Mammary epithelial cell (primary cell): ENCODE measurements at regions of chr17 and their contacts with region 1.

Region 1: GRCh38 chr17:81576621-81577277 is 24.6 kb upstream of the FAAP100 start:
- DNase-seq: peak; percentile 70
- H3K4me3 ChIP-seq: no peak overlapping the region
- H3K27ac ChIP-seq: peak overlapping the region; percentile 8
- H3K4me1 ChIP-seq: peaks cover 33% of the 10 kb centered on the region
- H3K27me3 ChIP-seq: no peaks in the 10 kb centered on the region
- CTCF ChIP-seq: no peak

Region 2: DNA sequence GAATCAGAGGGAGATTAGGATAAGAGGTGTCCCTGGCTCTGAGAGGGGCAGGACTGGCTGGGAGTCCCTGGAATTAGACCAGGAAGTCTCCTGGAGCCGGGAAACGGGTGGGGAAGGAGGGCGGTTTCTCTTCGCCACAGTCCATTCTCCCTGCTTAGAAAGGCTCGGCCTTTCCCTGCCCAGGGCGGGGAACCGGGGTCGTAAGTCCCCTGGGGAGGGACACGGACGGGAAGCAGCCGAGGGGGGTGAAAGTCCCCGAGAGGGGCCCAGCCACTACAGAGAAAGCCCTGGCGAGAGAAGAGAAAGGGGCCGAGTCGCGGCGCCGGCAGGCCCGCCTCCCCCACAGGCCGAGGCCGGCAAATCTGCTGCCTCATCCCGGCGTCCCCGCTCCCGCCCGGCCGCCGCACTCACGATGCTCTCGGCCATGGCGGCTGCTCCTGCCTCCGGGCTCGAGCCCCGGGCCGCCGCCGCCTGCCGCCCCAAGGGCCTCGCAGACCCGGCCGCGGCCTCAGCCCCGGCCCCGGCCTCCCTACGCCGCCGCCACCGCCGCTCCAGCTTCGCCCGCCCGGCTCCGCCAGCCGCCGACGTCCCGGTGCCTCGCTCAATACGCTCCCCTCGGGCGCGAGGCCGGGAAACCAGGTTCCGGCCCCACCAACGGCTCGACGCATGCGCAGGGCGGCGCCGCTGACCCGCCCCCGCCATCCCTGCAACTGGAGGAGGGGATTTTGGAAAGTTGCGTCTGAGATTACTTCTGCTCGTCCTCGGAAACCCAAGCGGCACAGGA is 59.9 kb after region 1 on chr17 and contains the starts of genes NPLOC4 and TSPAN10:
- CTCF ChIA-PET with region 1: no interaction called
- dilution Hi-C with region 1: loop called (anchors 5 kb)
- in situ Hi-C with region 1: no loop called
- intact Hi-C with region 1: no loop called
- DNase-seq: peak; percentile 85
- H3K4me3 ChIP-seq: peak within 1 kb of the TSS; percentile 81 to 89 (median 84)
- H3K27ac ChIP-seq: peak within 1 kb of the TSS; percentile 87
- H3K4me1 ChIP-seq: peaks cover 13% of the 10 kb centered on the region
- H3K27me3 ChIP-seq: no peaks in the 10 kb centered on the region
- CTCF ChIP-seq: no peak
- total RNA-seq, gene NPLOC4: 84.2 to 103 TPM
- total RNA-seq, gene TSPAN10: 1.7 to 1.8 TPM

Region 3: GRCh38 chr17:81672504-81672903 is 95.8 kb after region 1 on chr17:
- CTCF ChIA-PET with region 1: no interaction called
- dilution Hi-C with region 1: loop called (anchors 5 kb)
- in situ Hi-C with region 1: no loop called
- intact Hi-C with region 1: no loop called
- DNase-seq: no peak
- H3K4me3 ChIP-seq: no peak overlapping the region
- H3K27ac ChIP-seq: no peak overlapping the region
- H3K4me1 ChIP-seq: peaks cover 16% of the 10 kb centered on the region
- H3K27me3 ChIP-seq: no peaks in the 10 kb centered on the region
- CTCF ChIP-seq: no peak

Region 4: GRCh38 chr17:82536512-82537201 is 959.9 kb after region 1 on chr17:
- CTCF ChIA-PET with region 1: no interaction called
- dilution Hi-C with region 1: no loop called
- in situ Hi-C with region 1: no loop called
- intact Hi-C with region 1: no loop called
- DNase-seq: peak; percentile 32
- H3K4me3 ChIP-seq: no peak overlapping the region
- H3K27ac ChIP-seq: peak overlapping the region; percentile 82
- H3K4me1 ChIP-seq: peaks cover 41% of the 10 kb centered on the region
- H3K27me3 ChIP-seq: no peaks in the 10 kb centered on the region
- CTCF ChIP-seq: no peak